Naive thymus-derived CD4-positive, alpha-beta T cell (primary cell): ENCODE measurements at regions of chr18 and their contacts with region 1.

Region 1: DNA sequence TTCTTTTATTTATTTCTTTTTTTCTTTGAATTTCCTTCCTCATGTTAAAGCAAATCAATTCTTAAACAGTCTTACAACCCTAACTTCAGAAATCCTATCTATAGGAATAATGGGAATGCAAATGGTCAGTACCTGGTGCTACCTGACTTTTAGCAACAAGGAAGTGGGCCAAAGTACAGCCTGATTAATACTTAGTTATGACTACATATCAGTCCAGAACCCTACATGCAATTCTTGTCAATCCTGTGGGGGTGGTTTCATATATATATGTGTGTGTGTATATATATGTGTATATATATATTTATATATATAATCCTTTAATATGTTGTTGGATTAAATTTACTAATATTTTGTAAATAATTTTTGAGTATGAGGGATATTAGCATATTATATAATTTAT is 14.8 kb upstream of the TRAPPC8 start:
- DNase-seq: no peak
- ATAC-seq: no peak
- H3K4me3 ChIP-seq: no peak overlapping the region
- H3K4me3 Mint-ChIP-seq: no peak overlapping the region
- H3K27ac ChIP-seq: no peak overlapping the region
- H3K27ac Mint-ChIP-seq: no peak overlapping the region
- H3K4me1 ChIP-seq: no peaks in the 10 kb centered on the region
- H3K4me1 Mint-ChIP-seq: peaks cover 0 to 2% (median 0%) of the 10 kb centered on the region in 7 donors
- H3K27me3 ChIP-seq: no peaks in the 10 kb centered on the region
- H3K27me3 Mint-ChIP-seq: peaks cover 0 to under 1% (median 0%) of the 10 kb centered on the region in 5 donors

Region 2: DNA sequence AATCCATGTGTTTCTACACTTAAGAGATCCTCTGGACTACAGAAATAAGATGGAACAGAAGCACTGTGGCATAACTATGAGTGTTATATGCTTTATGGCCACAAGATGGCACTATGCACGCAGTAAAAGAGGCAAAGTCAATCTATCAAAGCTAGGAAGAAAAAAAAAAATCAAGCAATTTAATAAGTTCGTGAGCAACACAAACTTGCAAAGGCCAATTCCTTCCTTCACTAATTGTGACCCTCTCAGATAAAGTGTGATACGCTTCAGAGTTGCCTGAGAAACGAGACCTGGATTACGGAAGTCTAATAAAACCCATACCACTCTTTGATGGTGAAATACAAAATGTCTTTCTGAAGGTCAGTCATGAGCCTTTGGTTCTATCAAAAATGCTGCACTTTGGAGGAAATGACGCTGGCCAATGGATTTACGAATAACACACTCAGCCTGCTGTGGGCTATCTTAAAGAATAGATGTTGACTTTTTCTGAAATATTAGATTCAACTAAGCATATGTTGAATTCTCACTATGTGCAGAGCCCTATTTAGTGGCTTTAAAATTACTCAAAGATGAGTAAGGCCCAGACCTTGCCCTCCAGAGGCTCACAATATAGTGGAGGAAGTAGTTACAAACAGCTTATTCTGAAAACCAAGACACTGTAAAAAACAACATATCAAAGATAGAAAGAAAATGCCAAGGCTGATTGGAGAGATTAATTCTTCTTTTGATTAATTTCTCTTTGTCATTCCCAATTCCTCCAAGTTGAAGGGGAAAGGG is 401.6 kb before region 1 on chr18:
- CTCF ChIA-PET with region 1: no interaction called
- POLR2A ChIA-PET with region 1: no interaction called
- intact Hi-C with region 1: loop called in 1 of 2 experiments (anchors 1 kb)
- DNase-seq: peak in 7 of 9 donors; percentile 19 to 59 (median 41)
- ATAC-seq: peak; percentile 81
- H3K4me3 ChIP-seq: no peak overlapping the region
- H3K4me3 Mint-ChIP-seq: peak overlapping the region in 1 of 10 donors; percentile 67
- H3K27ac ChIP-seq: no peak overlapping the region
- H3K27ac Mint-ChIP-seq: peak overlapping the region in 2 of 9 donors; percentile 9
- H3K4me1 ChIP-seq: no peaks in the 10 kb centered on the region
- H3K4me1 Mint-ChIP-seq: peaks cover 0 to 3% (median 0%) of the 10 kb centered on the region in 7 donors
- H3K27me3 ChIP-seq: no peaks in the 10 kb centered on the region
- H3K27me3 Mint-ChIP-seq: peaks cover 6 to 27% (median 19%) of the 10 kb centered on the region in 5 donors

Region 3: DNA sequence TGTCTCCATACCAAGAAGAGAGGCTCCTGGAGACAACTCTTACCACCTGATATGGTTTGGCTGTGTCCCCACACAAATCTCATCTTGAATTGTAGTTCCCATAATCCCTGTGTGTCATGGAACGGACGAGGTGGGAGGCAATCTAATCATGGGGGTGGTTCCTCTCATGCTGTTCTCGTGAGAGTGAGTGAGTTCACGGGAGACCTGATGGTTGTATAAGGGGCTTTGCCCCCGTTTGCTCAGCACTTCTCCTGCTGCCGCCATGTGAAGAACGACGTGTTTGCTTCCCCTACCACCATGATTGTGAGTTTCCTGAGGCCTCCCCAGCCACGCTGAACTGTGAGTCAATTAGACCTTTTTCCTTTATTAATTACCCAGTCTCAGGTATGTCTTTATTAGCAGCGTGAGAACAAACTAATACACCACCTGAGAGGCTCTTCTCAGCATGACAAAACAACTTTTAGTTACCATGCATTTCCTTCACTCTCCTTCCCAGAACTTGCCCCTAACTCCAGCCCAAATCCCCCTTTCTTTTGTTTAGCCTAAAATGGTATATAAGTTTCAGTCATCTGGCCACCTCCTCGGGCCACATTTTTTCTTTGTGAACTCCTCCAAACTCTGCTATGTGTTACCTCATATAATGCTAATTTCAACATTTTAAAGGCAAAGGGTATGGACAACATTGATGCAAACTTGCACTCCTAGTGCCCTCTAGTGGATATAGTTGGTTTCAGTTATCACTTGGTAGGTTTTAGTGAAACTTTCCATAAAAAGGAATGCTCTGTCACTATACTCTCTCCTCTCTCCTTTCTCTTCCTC is 138.4 kb before region 1 on chr18:
- CTCF ChIA-PET with region 1: no interaction called
- POLR2A ChIA-PET with region 1: no interaction called
- intact Hi-C with region 1: loop called (anchors 1 to 2 kb)
- DNase-seq: peak in 5 of 9 donors; percentile 8 to 27 (median 14)
- ATAC-seq: peak; percentile 75
- H3K4me3 ChIP-seq: no peak overlapping the region
- H3K4me3 Mint-ChIP-seq: no peak overlapping the region
- H3K27ac ChIP-seq: no peak overlapping the region
- H3K27ac Mint-ChIP-seq: no peak overlapping the region
- H3K4me1 ChIP-seq: no peaks in the 10 kb centered on the region
- H3K4me1 Mint-ChIP-seq: peaks cover 0 to 3% (median 0%) of the 10 kb centered on the region in 7 donors
- H3K27me3 ChIP-seq: no peaks in the 10 kb centered on the region
- H3K27me3 Mint-ChIP-seq: peaks cover 0 to 8% (median 5%) of the 10 kb centered on the region in 5 donors

Region 4: GRCh38 chr18:31892936-31893335 is 64.8 kb before region 1 on chr18:
- CTCF ChIA-PET with region 1: interaction called, 3 read pairs
- POLR2A ChIA-PET with region 1: no interaction called
- intact Hi-C with region 1: loop called in 1 of 2 experiments (anchors 5 kb)
- DNase-seq: no peak
- ATAC-seq: no peak
- H3K4me3 ChIP-seq: no peak overlapping the region
- H3K4me3 Mint-ChIP-seq: no peak overlapping the region
- H3K27ac ChIP-seq: no peak overlapping the region
- H3K27ac Mint-ChIP-seq: no peak overlapping the region
- H3K4me1 ChIP-seq: no peaks in the 10 kb centered on the region
- H3K4me1 Mint-ChIP-seq: peaks cover 0 to 6% (median 0%) of the 10 kb centered on the region in 7 donors
- H3K27me3 ChIP-seq: no peaks in the 10 kb centered on the region
- H3K27me3 Mint-ChIP-seq: no peaks in the 10 kb centered on the region

Region 5: GRCh38 chr18:31942999-31943865 is 14.5 kb before region 1 on chr18 and contains the start of gene TRAPPC8:
- CTCF ChIA-PET with region 1: interaction called, 4 read pairs
- POLR2A ChIA-PET with region 1: interaction called, 3 read pairs
- intact Hi-C with region 1: loop called (anchors 1 kb)
- DNase-seq: peak; percentile 81 to 94 (median 91)
- ATAC-seq: peak; percentile 91
- H3K4me3 ChIP-seq: peak within 1 kb of the TSS; percentile 98
- H3K4me3 Mint-ChIP-seq: peak within 1 kb of the TSS; percentile 95 to 100 (median 98)
- H3K27ac ChIP-seq: peak within 1 kb of the TSS; percentile 97
- H3K27ac Mint-ChIP-seq: peak within 1 kb of the TSS; percentile 95 to 100 (median 99)
- H3K4me1 ChIP-seq: peaks cover 17 to 26% of the 10 kb centered on the region in 2 donors
- H3K4me1 Mint-ChIP-seq: peaks cover 28 to 54% (median 44%) of the 10 kb centered on the region in 7 donors
- H3K27me3 ChIP-seq: no peaks in the 10 kb centered on the region
- H3K27me3 Mint-ChIP-seq: no peaks in the 10 kb centered on the region
- total RNA-seq, gene TRAPPC8: 31.0 to 62.7 (median 44.3) TPM